OCI-LY7 (cell line): ENCODE measurements at regions of chr18 and their contacts with region 1.

Region 1: DNA sequence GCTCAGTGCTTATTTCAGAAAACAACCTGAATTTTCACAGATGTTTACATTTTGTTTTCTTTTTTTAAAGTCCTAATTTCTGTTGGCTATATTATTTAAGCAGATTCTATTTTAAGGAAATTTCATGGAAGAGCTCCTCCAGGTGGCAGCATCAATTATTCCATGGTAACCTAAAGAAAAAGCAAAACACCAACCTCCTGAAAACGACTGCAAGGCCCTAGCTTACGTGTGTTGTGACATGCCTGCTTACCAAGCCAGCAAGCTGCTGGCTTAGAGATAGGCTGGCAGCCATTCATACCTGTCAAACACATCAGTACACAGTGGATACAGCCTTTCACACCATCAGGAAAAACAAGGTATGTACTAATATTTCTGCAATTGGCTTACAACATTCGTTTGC is 64.9 kb downstream of the LPIN2 start:
- DNase-seq: no peak
- H3K4me3 ChIP-seq: no peak overlapping the region
- H3K27ac ChIP-seq: no peak overlapping the region
- H3K4me1 ChIP-seq: peaks cover 4% of the 10 kb centered on the region
- CTCF ChIP-seq: peak; percentile 47; the same call in 1 of the 2 replicates

Region 2: GRCh38 chr18:2985628-2986027 is 37.6 kb after region 1 on chr18:
- CTCF ChIA-PET with region 1: no interaction called
- POLR2A ChIA-PET with region 1: interaction called, 13 read pairs
- intact Hi-C with region 1: no loop called
- DNase-seq: peak; percentile 71
- H3K4me3 ChIP-seq: no peak overlapping the region
- H3K27ac ChIP-seq: no peak overlapping the region
- H3K4me1 ChIP-seq: peaks cover 48% of the 10 kb centered on the region
- CTCF ChIP-seq: peak; percentile 94